SK-N-SH (cell line): ENCODE measurements at regions of chr2 and their contacts with region 1.

Region 1: DNA sequence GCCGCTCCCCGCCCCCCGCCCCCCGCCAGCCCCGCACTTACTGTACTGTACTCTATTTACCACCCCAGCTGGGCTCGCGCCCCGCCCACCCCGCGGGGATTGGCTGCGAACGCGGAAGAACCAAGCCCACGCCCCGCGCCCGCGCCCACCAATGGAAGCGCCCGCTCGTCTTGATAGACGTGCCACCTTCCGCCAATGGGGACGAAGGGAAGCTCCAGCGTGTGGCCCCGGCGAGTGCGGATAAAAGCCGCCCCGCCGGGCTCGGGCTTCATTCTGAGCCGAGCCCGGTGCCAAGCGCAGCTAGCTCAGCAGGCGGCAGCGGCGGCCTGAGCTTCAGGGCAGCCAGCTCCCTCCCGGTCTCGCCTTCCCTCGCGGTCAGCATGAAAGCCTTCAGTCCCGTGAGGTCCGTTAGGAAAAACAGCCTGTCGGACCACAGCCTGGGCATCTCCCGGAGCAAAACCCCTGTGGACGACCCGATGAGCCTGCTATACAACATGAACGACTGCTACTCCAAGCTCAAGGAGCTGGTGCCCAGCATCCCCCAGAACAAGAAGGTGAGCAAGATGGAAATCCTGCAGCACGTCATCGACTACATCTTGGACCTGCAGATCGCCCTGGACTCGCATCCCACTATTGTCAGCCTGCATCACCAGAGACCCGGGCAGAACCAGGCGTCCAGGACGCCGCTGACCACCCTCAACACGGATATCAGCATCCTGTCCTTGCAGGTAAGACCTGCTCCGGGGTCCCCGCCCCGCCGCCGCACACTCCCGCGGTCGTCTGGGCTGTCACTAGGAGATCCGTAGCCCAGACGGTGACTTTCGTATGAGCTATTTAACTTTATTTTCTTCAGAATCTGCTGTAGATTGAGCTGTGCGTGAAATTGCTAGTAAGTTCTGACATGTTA is at the start of gene ID2:
- DNase-seq: peak; percentile 98
- H3K4me3 ChIP-seq: peak within 1 kb of the TSS; percentile 98 to 100
- H3K27ac ChIP-seq: peak within 1 kb of the TSS; percentile 97 to 99
- H3K4me1 ChIP-seq: peaks cover 12 to 48% of the 10 kb centered on the region in 2 experiments
- H3K27me3 ChIP-seq: no peaks in the 10 kb centered on the region
- CTCF ChIP-seq: no peak
- EP300 ChIP-seq: peak in 1 of 2 experiments; percentile 33; a peak in 1 of 4 replicates
- RAD21 ChIP-seq: peak; percentile 27; the same call in 1 of the 2 replicates
- polyA plus RNA-seq, gene ID2: 385 and 459 TPM in 2 replicates

Region 2: DNA sequence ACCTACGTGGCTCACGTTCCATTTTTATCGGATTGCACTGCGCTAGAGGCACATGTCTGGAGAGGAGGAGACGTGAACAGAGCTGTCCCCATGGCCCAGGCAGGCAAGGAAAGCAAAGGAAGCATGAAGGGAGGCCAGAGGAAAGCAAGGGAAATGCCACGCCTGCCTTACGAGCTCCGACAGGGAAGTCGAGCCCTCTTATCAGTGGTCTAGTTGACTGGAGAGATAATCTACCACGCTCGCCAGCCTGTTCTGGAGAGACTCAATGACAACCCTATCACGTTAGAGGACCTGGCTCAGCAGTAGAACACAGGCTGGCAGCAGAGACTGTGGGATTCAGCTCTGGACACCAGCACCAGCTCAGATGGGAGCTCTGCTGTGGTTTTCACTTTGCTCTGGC is 202.7 kb before region 1 on chr2:
- CTCF ChIA-PET with region 1: no interaction called
- POLR2A ChIA-PET with region 1: interaction called, 11 read pairs
- DNase-seq: peak; percentile 79
- H3K4me3 ChIP-seq: no peak overlapping the region
- H3K27ac ChIP-seq: peak overlapping the region in 1 of 2 experiments; percentile 19; a peak in 1 of 4 replicates
- H3K4me1 ChIP-seq: peaks cover 0 to 32% of the 10 kb centered on the region in 2 experiments; a peak in 2 of 4 replicates
- H3K27me3 ChIP-seq: no peaks in the 10 kb centered on the region
- CTCF ChIP-seq: no peak
- EP300 ChIP-seq: peak in 1 of 2 experiments; percentile 57; a peak in 2 of 4 replicates
- RAD21 ChIP-seq: peak; percentile 52

Region 3: GRCh38 chr2:8525582-8526402 is 156.2 kb before region 1 on chr2:
- CTCF ChIA-PET with region 1: interaction called, 8 read pairs
- POLR2A ChIA-PET with region 1: interaction called, 21 read pairs
- DNase-seq: peak; percentile 79
- H3K4me3 ChIP-seq: no peak overlapping the region
- H3K27ac ChIP-seq: peak overlapping the region in 1 of 2 experiments; percentile 82; a peak in 2 of 4 replicates
- H3K4me1 ChIP-seq: peaks cover 0 to 37% of the 10 kb centered on the region in 2 experiments; a peak in 2 of 4 replicates
- H3K27me3 ChIP-seq: no peaks in the 10 kb centered on the region; the same call in 1 of the 2 replicates
- CTCF ChIP-seq: no peak
- EP300 ChIP-seq: peak in 1 of 2 experiments; percentile 35; a peak in 1 of 4 replicates
- RAD21 ChIP-seq: peak; percentile 71

Region 4: GRCh38 chr2:8534729-8535468 is 147.1 kb before region 1 on chr2:
- CTCF ChIA-PET with region 1: interaction called, 14 read pairs
- POLR2A ChIA-PET with region 1: interaction called, 154 read pairs
- DNase-seq: peak; percentile 74
- H3K4me3 ChIP-seq: no peak overlapping the region
- H3K27ac ChIP-seq: peak overlapping the region in 1 of 2 experiments; percentile 86; a peak in 1 of 4 replicates
- H3K4me1 ChIP-seq: peaks cover 4 to 57% of the 10 kb centered on the region in 2 experiments; a peak in 3 of 4 replicates
- H3K27me3 ChIP-seq: no peaks in the 10 kb centered on the region
- CTCF ChIP-seq: no peak
- EP300 ChIP-seq: peak in 1 of 2 experiments; percentile 65; a peak in 1 of 4 replicates
- RAD21 ChIP-seq: 0 out of 2 replicates have a peak, but pooled peaks have one; percentile 17

Region 5: DNA sequence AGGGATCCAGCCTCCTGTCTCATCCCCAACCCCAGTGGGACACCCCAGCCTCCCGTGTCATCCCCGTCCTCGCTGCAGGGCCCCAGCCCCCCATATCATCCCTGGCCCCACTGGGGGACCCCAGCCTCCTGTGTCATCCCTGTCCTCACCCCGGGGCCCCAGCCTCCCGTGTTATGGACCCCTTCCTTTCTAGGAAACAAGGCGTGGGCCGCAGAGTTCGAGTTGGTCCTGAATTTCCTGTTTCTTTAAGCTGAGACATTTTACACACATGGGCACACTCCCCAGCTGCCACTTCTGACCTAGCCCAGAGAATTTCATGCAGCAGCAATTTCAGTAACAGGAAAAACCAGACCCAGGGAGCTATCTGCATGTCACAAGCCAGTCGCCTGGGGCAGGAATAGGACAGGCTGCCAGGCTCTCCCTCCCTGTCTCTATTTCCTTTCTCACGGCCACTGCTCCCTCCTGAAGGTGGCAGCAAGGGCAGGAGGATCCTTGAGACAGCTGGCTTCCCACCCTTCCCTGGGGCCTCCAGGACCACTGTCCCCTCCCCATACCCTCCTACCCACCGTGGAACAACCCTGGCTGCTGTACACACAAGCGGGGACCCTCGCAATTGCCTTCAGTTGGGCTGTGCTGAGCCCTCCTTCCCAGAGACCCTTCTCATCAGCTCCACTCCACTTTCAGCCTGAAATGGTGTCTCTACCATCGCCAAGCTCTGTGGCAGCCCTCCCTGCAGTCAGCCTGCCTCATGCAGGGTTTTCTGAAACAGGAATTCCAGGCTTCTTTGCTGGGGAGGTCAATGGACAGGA is 142.1 kb before region 1 on chr2:
- CTCF ChIA-PET with region 1: interaction called, 14 read pairs
- POLR2A ChIA-PET with region 1: interaction called, 154 read pairs
- DNase-seq: peak; percentile 93
- H3K4me3 ChIP-seq: no peak overlapping the region
- H3K27ac ChIP-seq: peak overlapping the region in 1 of 2 experiments; percentile 79; a peak in 2 of 4 replicates
- H3K4me1 ChIP-seq: peaks cover 16 to 95% of the 10 kb centered on the region in 2 experiments
- H3K27me3 ChIP-seq: no peaks in the 10 kb centered on the region
- CTCF ChIP-seq: no peak
- EP300 ChIP-seq: peak in 1 of 2 experiments; percentile 95; a peak in 2 of 4 replicates
- RAD21 ChIP-seq: peak; percentile 54; the same call in 1 of the 2 replicates

Region 6: GRCh38 chr2:8544786-8545694 is 137.0 kb before region 1 on chr2:
- CTCF ChIA-PET with region 1: interaction called, 14 read pairs
- POLR2A ChIA-PET with region 1: interaction called, 154 read pairs
- DNase-seq: peak; percentile 83
- H3K4me3 ChIP-seq: no peak overlapping the region
- H3K27ac ChIP-seq: peak overlapping the region in 1 of 2 experiments; percentile 96; a peak in 2 of 4 replicates
- H3K4me1 ChIP-seq: peaks cover 17 to 55% of the 10 kb centered on the region in 2 experiments; a peak in 3 of 4 replicates
- H3K27me3 ChIP-seq: no peaks in the 10 kb centered on the region
- CTCF ChIP-seq: peak; percentile 64
- EP300 ChIP-seq: peak in 1 of 2 experiments; percentile 61; a peak in 1 of 4 replicates
- RAD21 ChIP-seq: peak; percentile 54

Region 7: GRCh38 chr2:8574144-8575037 is 107.6 kb before region 1 on chr2:
- CTCF ChIA-PET with region 1: interaction called, 4 read pairs
- POLR2A ChIA-PET with region 1: interaction called, 15 read pairs
- DNase-seq: no peak
- H3K4me3 ChIP-seq: no peak overlapping the region
- H3K27ac ChIP-seq: peak overlapping the region in 1 of 2 experiments; percentile 67; a peak in 2 of 4 replicates
- H3K4me1 ChIP-seq: peaks cover 0 to 38% of the 10 kb centered on the region in 2 experiments; a peak in 2 of 4 replicates
- H3K27me3 ChIP-seq: no peaks in the 10 kb centered on the region
- CTCF ChIP-seq: no peak
- EP300 ChIP-seq: no peak
- RAD21 ChIP-seq: no peak

Region 8: DNA sequence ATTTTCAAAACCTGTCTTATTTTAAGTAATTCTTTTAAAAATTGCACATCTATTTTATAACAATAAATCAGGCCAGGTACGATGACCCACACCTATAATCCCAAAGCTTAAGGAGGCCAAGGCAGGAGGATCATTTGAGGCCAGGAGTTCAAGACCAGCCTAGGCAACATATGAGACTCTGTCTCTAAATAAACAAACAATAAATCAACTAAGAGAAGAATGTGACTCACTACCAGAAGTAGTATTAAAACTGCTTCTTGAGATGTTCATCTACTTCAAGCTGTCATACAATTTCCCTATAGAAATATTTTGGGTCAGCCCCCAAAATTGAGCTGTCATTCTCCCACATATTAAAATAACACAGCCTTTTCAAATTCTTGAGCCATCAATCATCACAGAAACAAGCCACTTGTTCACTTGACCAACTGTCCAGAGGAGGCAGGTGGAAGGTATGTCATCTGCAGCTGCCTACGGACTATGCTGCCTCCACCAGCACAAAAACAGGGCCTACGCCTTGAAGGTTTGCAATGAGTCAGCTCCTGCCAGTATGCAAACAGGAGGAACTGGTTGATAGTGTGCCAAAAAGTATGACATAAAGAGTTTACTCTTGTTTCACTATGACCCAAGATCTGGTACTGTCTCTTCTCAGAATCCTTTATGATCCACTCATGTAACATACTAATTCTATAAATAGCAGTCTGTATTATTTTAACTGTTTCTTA is 121.8 kb after region 1 on chr2:
- CTCF ChIA-PET with region 1: no interaction called
- POLR2A ChIA-PET with region 1: no interaction called
- DNase-seq: no peak
- H3K4me3 ChIP-seq: no peak overlapping the region
- H3K27ac ChIP-seq: peak overlapping the region in 1 of 2 experiments; percentile 24; a peak in 1 of 4 replicates
- H3K4me1 ChIP-seq: peaks cover 2 to 7% of the 10 kb centered on the region in 2 experiments; a peak in 2 of 4 replicates
- H3K27me3 ChIP-seq: no peaks in the 10 kb centered on the region
- CTCF ChIP-seq: no peak
- EP300 ChIP-seq: no peak
- RAD21 ChIP-seq: no peak